IMR-90 (cell line): ENCODE measurements at regions of chr2 and their contacts with region 1.

Region 1: GRCh38 chr2:136171221-136171620 is 53.3 kb upstream of the CXCR4 start:
- DNase-seq: no peak
- ATAC-seq: no peak
- H3K4me3 ChIP-seq: no peak overlapping the region
- H3K27ac ChIP-seq: no peak overlapping the region
- H3K4me1 ChIP-seq: no peaks in the 10 kb centered on the region
- H3K27me3 ChIP-seq: no peaks in the 10 kb centered on the region
- CTCF ChIP-seq: no peak
- POLR2A ChIP-seq: no peak
- RAD21 ChIP-seq: no peak

Region 2: DNA sequence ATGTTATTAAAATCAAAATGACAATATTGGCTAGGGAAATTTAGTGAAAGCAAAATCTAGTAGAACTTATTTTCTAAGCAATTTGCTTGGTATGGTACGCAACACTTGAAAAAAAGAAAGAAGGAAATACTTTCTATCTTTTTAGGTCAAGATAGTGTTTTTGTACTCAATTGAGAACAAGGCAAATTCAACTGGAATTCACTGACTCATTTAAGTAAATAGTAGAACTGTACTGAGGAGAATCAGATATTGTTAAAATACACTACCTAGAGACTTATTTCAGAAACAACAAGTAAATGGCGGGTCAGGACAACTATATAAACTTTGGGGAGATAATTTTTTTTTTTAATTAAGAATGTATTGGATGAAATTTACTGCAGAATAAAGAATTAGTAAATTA is 659.1 kb before region 1 on chr2:
- CTCF ChIA-PET with region 1: no interaction called
- POLR2A ChIA-PET with region 1: no interaction called
- dilution Hi-C with region 1: no loop called
- in situ Hi-C with region 1: no loop called
- intact Hi-C with region 1: no loop called
- DNase-seq: peak; percentile 33
- ATAC-seq: 0 out of 2 replicates have a peak, but pooled peaks have one; percentile 35
- H3K4me3 ChIP-seq: no peak overlapping the region
- H3K27ac ChIP-seq: no peak overlapping the region
- H3K4me1 ChIP-seq: no peaks in the 10 kb centered on the region
- H3K27me3 ChIP-seq: no peaks in the 10 kb centered on the region
- CTCF ChIP-seq: no peak
- POLR2A ChIP-seq: no peak
- RAD21 ChIP-seq: no peak

Region 3: DNA sequence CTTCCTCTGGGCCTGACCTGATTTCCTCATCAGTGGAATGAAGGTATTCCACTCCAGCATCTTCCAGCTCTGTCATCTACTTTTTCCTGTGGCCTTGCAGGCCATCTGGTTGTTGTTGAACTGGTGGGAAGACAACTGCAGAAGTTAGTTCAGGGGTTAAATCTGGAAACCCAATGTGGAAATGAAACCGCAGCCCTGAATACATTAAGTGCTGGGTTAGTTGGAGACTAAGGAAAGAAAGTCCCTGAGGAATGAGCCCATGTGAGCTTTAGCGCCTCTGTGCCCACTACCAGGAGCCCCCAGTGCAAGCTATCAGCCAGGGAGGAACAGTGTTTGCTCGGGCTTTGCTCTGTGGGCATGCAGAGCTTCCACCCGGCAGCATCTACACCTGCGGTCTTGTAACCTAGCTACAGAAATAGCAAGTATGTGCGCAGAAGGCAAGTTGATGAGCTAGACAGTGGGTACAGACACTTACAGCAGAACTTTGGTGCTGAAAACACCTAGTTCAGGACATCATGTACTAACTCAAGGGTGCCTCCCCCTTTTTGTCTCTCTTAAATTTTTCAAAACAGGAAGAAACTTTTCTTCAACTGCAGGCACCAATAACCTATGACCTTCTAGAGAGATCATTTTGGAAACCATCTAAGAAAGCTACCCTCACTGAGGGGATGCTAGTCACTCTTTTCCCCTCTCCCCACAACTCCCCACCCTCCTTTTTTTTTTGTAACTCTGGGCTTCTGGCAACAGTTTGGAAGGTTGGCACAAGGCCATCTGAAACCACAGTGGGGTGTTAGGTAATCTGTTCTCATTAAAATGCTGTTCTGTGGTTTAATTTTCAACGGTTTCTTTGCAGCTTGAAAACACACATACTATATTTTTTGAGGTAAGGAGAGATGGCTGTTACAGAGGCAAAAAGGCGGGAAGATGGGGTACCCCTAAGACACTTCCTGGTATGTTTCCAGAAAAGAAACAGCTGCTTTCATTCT is 35.0 kb before region 1 on chr2:
- CTCF ChIA-PET with region 1: no interaction called
- POLR2A ChIA-PET with region 1: no interaction called
- dilution Hi-C with region 1: no loop called
- in situ Hi-C with region 1: no loop called
- intact Hi-C with region 1: no loop called
- DNase-seq: no peak
- ATAC-seq: no peak
- H3K4me3 ChIP-seq: no peak overlapping the region
- H3K27ac ChIP-seq: no peak overlapping the region
- H3K4me1 ChIP-seq: no peaks in the 10 kb centered on the region
- H3K27me3 ChIP-seq: no peaks in the 10 kb centered on the region
- CTCF ChIP-seq: no peak
- POLR2A ChIP-seq: no peak
- RAD21 ChIP-seq: no peak

Region 4: GRCh38 chr2:136284226-136285119 is 113.3 kb after region 1 on chr2:
- CTCF ChIA-PET with region 1: no interaction called
- POLR2A ChIA-PET with region 1: no interaction called
- dilution Hi-C with region 1: no loop called
- in situ Hi-C with region 1: no loop called
- intact Hi-C with region 1: no loop called
- DNase-seq: no peak
- ATAC-seq: no peak
- H3K4me3 ChIP-seq: no peak overlapping the region
- H3K27ac ChIP-seq: no peak overlapping the region
- H3K4me1 ChIP-seq: no peaks in the 10 kb centered on the region
- H3K27me3 ChIP-seq: no peaks in the 10 kb centered on the region
- CTCF ChIP-seq: no peak
- POLR2A ChIP-seq: no peak
- RAD21 ChIP-seq: no peak

Region 5: DNA sequence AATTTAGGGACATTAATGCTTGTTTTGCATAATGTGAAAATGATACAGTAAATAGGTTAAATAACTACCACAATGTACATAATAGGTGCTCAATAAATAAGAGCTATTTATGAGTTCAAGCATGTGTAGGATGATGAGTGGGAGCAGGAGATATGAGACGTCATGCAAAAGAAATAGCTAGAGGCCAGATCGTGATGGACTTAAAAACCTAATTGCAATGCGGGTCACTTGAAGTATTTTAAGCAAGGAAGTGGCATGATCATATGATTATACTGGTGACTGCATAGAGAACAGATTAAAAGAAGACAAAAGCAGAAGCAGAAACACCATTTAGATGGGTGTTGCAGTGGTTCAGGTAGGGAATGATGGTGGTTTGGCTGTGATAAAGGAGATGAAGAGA is 1871.1 kb after region 1 on chr2:
- CTCF ChIA-PET with region 1: no interaction called
- POLR2A ChIA-PET with region 1: no interaction called
- dilution Hi-C with region 1: no loop called
- in situ Hi-C with region 1: no loop called
- intact Hi-C with region 1: loop called (anchors 5 kb)
- DNase-seq: no peak
- ATAC-seq: no peak
- H3K4me3 ChIP-seq: no peak overlapping the region
- H3K27ac ChIP-seq: no peak overlapping the region
- H3K4me1 ChIP-seq: no peaks in the 10 kb centered on the region
- H3K27me3 ChIP-seq: no peaks in the 10 kb centered on the region
- CTCF ChIP-seq: no peak
- POLR2A ChIP-seq: no peak
- RAD21 ChIP-seq: no peak